Activated CD4-positive, alpha-beta T cell treated with anti-CD3 and anti-CD28 coated beads, Interleukin-2, amount 10 ng/mL, durations not matched to agents 24 days and 14 days (primary cell): ENCODE measurements at regions of chr4 and their contacts with region 1.

Region 1: GRCh38 chr4:121726642-121727268 is 30.0 kb upstream of the ANXA5 start:
- DNase-seq: peak; percentile 74
- H3K4me3 Mint-ChIP-seq: no peak overlapping the region
- H3K27ac Mint-ChIP-seq: no peak overlapping the region
- H3K4me1 Mint-ChIP-seq: peaks cover 5% of the 10 kb centered on the region
- H3K27me3 Mint-ChIP-seq: peaks cover 5% of the 10 kb centered on the region

Region 2: GRCh38 chr4:121462660-121463261 is 264.0 kb before region 1 on chr4:
- intact Hi-C with region 1: loop called (anchors 2 kb)
- DNase-seq: peak; percentile 85
- H3K4me3 Mint-ChIP-seq: no peak overlapping the region
- H3K27ac Mint-ChIP-seq: no peak overlapping the region
- H3K4me1 Mint-ChIP-seq: peaks cover 2% of the 10 kb centered on the region
- H3K27me3 Mint-ChIP-seq: peaks cover 38% of the 10 kb centered on the region

Region 3: GRCh38 chr4:121484633-121485032 is 242.1 kb before region 1 on chr4:
- intact Hi-C with region 1: loop called (anchors 2 kb)
- DNase-seq: peak; percentile 73
- H3K4me3 Mint-ChIP-seq: no peak overlapping the region
- H3K27ac Mint-ChIP-seq: no peak overlapping the region
- H3K4me1 Mint-ChIP-seq: peaks cover 3% of the 10 kb centered on the region
- H3K27me3 Mint-ChIP-seq: peaks cover 34% of the 10 kb centered on the region

Region 4: DNA sequence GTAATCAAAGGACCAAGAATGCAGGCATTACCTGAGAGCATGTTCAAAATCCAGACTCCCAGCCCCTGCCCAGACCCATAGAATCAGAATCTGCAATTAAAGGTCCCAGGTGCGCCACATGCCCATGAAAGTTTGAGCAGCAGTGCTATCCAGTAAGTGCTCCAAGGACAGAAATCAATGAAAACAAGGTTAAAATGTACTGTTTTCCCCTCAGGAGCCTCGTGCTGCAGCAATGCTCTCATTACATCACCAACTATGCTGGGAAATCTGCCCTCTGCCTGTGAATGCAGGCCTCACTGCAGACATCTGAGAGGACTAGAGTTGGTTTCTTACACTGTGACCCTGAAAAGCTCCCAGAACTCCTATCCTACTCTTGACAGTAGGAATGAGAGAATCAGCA is 51.0 kb before region 1 on chr4:
- intact Hi-C with region 1: loop called (anchors 10 kb)
- DNase-seq: peak; percentile 45
- H3K4me3 Mint-ChIP-seq: no peak overlapping the region
- H3K27ac Mint-ChIP-seq: no peak overlapping the region
- H3K4me1 Mint-ChIP-seq: peaks cover 6% of the 10 kb centered on the region
- H3K27me3 Mint-ChIP-seq: no peaks in the 10 kb centered on the region

Region 5: DNA sequence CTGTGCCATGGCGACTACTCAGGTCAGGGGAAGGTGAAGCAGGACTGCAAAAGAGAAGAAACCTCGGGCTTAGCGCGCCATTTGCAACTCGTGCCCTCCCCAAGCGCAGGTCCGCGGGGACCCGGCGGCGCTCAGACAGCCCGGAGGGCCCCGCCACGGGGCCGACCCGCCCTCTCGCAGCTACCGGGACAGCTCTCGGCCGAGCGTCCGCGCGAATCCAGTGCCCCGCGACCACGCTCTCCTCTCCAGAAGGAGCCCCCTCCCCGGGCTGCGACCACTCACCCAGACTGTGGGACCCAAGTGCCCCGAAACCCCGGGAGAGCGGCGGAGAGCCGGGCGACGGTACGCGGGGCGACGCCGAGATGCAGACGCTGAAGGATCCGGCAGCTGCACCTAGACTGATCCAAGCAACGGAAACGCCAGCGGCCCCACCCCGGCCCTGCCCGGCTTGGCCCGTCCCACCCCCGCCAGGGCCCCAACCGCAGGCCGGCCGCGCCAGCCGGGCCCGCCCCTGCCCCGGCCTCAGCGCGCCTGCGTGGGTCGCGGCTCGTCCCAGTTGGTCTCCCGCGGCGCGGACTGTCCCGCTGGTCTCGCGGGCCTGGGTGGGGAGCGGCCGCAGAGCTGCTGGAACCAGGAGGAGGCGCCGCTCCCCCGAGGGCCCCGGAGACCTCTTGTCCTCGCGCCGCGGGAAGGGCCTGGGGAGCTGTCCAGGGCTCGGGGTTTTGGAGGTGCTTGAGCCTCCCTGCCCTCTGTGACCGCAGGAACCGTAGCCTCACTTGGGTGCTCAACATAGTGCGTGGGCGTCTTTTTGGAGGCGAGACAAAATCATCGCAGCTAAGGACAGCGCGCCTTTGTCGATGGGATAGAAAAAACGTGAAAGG is 29.9 kb before region 1 on chr4 and contains the start of gene ANXA5:
- intact Hi-C with region 1: loop called (anchors 1 kb)
- DNase-seq: peak; percentile 94
- H3K4me3 Mint-ChIP-seq: peak within 1 kb of the TSS; percentile 98
- H3K27ac Mint-ChIP-seq: peak within 1 kb of the TSS; percentile 100
- H3K4me1 Mint-ChIP-seq: peaks cover 39% of the 10 kb centered on the region
- H3K27me3 Mint-ChIP-seq: peaks cover 33% of the 10 kb centered on the region
- total RNA-seq, gene ANXA5: 107 TPM in 2 replicates

Region 6: GRCh38 chr4:121706595-121707021 is 20.1 kb before region 1 on chr4:
- intact Hi-C with region 1: loop called (anchors 2 kb)
- DNase-seq: peak; percentile 80
- H3K4me3 Mint-ChIP-seq: peak overlapping the region; percentile 22
- H3K27ac Mint-ChIP-seq: peak overlapping the region; percentile 66
- H3K4me1 Mint-ChIP-seq: peaks cover 34% of the 10 kb centered on the region
- H3K27me3 Mint-ChIP-seq: peaks cover 20% of the 10 kb centered on the region